ENCODE measurements at regions of chr11 and their contacts with region 1.

Region 1: DNA sequence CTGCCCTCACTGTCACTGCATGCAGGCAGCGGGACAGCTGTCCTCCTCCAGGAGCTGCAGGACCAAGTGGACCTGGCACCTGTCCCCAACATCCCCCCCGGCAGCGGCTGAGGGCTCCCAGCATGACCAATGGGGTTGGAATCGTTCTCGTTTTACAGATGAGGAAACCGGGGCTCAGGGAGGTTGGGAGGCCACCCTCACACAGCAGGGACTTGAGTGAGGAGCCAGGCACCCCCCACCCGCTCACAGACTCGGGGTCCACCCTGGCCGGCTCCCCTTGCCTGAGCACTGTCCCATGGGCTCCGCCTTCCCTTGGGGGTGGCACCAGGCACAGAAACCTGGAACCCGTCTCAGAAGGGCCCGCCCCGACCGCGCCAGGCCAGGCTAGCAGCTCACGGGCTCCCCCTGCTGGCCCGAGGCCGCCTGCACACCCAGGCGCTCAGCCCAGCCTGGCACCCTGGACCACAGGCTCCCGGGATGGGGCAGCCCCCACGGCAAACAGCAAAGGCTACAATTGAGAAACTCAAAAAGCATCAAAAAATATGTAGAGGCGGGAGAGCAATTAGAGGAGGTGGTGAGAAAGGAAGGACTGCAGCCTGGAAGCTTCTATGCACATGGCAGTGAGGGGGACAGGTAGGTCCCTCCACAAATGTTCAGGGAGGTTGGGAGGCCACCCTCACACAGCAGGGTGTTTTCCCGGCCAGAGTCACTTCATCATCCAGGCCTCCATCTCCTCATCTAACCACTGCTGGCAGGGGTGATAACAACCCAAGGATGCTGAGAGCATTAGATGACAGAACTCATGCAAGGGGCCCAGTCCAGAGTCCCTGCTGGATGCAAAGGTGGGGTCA is 12.8 kb downstream of the MACROD1 start:
- DNase-seq: peak; percentile 95
- H3K4me3 ChIP-seq: peak overlapping the region in 1 of 2 experiments; percentile 42; a peak in 1 of 4 replicates
- H3K27ac ChIP-seq: peak overlapping the region in 1 of 2 experiments; percentile 55; a peak in 1 of 4 replicates
- H3K4me1 ChIP-seq: peaks cover 0 to 55% of the 10 kb centered on the region in 2 experiments; a peak in 2 of 4 replicates
- H3K27me3 ChIP-seq: no peaks in the 10 kb centered on the region
- CTCF ChIP-seq: peak; percentile 99
- EP300 ChIP-seq: no peak
- RAD21 ChIP-seq: peak; percentile 84

Region 2: DNA sequence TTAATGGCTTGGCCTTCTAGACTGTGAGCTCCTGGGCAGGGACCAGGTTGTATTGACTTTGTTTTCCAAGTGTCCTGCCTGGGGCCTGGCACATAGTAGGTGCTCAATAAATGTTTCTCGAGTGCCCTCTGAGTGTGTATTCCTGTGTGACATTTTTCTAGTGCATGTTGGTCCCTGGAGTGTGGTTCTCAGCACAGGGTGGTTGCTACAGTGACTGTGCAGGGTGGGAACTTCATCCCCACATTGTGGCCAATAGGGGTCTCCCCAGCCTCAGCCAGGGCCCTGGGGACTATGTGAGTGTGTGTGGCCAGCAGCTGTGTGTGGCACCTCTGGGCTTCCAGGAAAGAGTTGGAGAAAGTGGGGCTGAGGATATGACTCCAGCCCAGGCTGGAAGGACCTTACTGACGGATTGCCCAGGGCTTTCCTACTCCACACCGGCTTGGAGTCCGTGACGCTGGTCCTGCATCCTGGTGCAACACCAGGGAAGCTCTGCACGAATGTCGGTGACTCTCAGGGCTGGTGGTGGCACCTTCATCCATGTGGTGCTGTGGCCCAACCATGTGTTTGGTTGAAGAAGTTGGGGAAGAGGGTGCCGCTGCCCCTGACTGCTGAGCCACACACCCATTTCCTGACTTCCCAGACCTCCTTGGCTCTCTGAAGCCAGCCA is 323.1 kb before region 1 on chr11:
- CTCF ChIA-PET with region 1: interaction called, 12 read pairs
- POLR2A ChIA-PET with region 1: no interaction called
- DNase-seq: peak; percentile 79
- H3K4me3 ChIP-seq: no peak overlapping the region
- H3K27ac ChIP-seq: no peak overlapping the region
- H3K4me1 ChIP-seq: no peaks in the 10 kb centered on the region; a peak in 1 of 4 replicates
- H3K27me3 ChIP-seq: no peaks in the 10 kb centered on the region
- CTCF ChIP-seq: peak; percentile 45
- EP300 ChIP-seq: no peak
- RAD21 ChIP-seq: peak; percentile 65

Region 3: DNA sequence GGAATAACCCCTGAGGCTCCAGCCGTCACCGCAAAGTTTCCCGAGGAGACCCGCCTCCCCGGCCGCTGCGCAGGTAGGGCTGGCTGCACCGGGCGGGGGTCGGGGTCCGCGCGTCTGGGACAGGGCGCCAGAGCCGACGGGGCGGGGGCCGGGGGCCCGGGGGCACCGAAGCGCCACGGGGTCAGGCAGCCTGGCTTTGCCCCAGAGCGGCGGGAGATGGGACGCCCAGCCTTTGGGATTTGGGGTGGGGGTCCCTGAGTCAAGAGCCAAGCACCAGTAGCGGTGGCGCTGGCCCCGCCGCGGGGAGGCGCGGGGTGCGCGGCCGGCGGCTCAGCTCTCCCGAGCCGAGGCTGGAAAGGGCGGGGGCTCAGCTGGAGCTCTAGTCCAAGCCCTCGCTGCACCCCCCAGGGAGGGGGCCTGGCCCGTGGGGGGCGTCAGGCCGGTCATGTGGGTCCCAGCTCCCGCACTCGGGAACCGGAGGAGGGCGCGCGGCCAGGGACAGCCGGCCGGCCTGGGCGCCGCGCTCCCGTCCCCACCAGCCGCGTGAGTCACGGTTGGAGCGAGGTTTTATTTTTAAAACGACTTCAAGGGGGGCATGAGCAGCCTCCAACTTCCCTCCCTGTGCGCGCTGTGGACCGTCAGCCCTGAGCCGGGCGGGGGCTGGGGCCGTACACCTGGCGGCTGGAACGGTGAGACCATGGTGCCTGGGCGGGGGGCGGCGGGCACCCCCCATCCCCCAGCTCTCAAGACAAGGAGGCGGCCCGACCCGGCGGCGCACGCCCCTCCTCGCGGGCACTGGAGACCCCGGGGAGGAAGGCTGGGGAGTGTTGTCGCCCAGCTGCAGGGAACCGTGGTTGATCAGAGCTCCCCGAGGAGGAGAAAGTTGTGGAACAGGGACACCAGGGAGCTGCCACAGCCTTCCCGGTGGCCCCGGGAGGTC is 116.7 kb before region 1 on chr11:
- CTCF ChIA-PET with region 1: interaction called, 207 read pairs
- POLR2A ChIA-PET with region 1: interaction called, 7 read pairs
- DNase-seq: peak; percentile 73
- H3K4me3 ChIP-seq: peak overlapping the region; percentile 58 to 62
- H3K27ac ChIP-seq: peak overlapping the region in 1 of 2 experiments; percentile 84; a peak in 2 of 4 replicates
- H3K4me1 ChIP-seq: peaks cover 3 to 59% of the 10 kb centered on the region in 2 experiments; a peak in 2 of 4 replicates
- H3K27me3 ChIP-seq: no peaks in the 10 kb centered on the region
- CTCF ChIP-seq: peak; percentile 29; the same call in 1 of the 2 replicates
- EP300 ChIP-seq: no peak
- RAD21 ChIP-seq: peak; percentile 9; the same call in 1 of the 2 replicates

Region 4: DNA sequence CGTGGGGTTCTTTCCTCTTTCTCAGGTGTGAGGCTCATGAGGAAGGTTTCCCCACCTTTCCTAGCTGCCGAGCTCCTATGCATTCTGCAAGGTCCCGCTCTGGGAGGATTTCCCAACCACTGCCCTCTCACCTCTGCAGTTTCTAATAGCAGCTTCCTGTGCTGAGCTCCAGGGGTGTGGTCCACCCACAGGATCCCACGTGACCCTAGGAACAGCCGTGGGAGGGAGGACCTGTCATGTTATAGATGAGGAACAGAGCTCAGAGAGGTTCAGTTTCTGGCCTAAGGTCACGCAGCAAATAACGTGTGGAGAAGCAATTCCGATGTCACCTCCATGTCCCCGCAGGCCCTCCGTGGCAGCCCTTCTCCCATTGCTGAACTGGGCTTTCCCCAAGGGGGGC is 78.8 kb before region 1 on chr11:
- CTCF ChIA-PET with region 1: interaction called, 14 read pairs
- POLR2A ChIA-PET with region 1: interaction called, 18 read pairs
- DNase-seq: no peak
- H3K4me3 ChIP-seq: no peak overlapping the region
- H3K27ac ChIP-seq: peak overlapping the region in 1 of 2 experiments; percentile 81; a peak in 1 of 4 replicates
- H3K4me1 ChIP-seq: peaks cover 11 to 90% of the 10 kb centered on the region in 2 experiments; a peak in 2 of 4 replicates
- H3K27me3 ChIP-seq: no peaks in the 10 kb centered on the region
- CTCF ChIP-seq: no peak
- EP300 ChIP-seq: no peak
- RAD21 ChIP-seq: no peak

Region 5: DNA sequence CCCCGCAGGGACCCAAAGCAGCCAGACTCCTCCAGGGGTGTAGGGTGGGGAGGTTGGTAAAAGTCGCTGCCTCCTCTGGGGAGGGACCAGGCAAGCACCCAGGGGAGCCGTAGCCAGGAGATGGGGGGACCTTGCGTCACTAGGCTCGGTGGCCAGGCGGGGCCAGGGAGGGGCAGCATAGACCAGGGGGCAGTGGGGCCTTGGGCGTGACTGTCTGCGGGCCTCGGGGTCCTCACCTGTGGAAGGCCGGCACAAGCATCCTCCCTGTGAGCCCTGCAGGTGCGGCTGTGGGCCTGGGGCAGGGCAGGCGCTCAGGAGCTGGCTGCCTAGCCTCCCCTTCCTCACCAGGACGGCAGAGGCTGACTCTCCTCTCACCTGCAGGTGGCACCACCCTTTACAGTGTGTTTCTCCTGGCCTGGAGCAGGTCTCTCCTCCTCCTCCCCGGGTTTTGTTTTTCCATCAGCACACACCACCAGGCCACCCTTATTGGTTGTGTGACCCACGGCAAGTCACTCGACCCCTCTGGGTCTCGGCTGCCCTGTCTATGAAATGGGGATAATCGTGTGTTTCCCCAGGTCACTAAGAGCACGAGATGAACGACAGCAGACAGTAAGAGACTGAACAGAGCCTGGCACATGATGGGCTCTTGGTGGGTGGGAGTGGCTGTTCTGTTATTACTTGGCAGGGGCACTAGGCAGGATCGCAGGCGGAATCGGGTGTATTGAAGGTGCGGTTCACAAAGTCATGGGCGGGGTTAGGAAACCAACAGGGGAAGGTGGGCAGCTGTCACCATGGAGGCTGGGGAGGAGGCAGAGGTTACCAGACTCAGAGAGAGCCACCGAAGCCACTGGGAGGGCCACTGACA is 64.7 kb before region 1 on chr11:
- CTCF ChIA-PET with region 1: interaction called, 28 read pairs
- POLR2A ChIA-PET with region 1: interaction called, 4 read pairs
- DNase-seq: no peak
- H3K4me3 ChIP-seq: no peak overlapping the region
- H3K27ac ChIP-seq: peak overlapping the region in 1 of 2 experiments; percentile 99; a peak in 2 of 4 replicates
- H3K4me1 ChIP-seq: peaks cover 0 to 95% of the 10 kb centered on the region in 2 experiments; a peak in 2 of 4 replicates
- H3K27me3 ChIP-seq: no peaks in the 10 kb centered on the region
- CTCF ChIP-seq: peak; percentile 26; the same call in 1 of the 2 replicates
- EP300 ChIP-seq: no peak
- RAD21 ChIP-seq: peak; percentile 33

Region 6: DNA sequence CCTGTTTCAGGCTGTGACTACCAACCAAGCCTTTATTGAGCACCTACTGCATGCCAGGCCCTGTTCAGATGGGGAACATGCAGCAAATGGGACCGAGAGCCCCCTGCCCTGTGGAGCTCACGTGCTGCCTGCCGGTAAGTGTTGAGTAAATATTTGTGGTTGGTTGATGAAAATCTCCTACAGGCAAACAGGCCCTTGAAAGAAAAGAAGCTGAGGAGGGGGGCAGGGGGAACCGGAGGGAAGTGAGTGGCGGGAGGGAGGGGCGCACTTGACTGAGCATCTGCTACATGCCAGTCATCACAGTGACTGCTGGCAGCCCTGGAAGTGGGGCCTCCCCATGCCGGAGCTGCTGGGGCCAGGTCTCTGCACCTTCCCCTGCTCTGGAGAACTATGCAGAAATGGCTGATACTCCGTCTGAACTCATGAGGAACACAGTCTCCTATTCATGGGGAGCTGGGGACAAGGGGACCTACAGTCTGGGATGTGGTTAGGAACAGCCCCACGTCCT is 21.3 kb before region 1 on chr11:
- CTCF ChIA-PET with region 1: interaction called, 25 read pairs
- POLR2A ChIA-PET with region 1: interaction called, 9 read pairs
- DNase-seq: no peak
- H3K4me3 ChIP-seq: no peak overlapping the region
- H3K27ac ChIP-seq: peak overlapping the region in 1 of 2 experiments; percentile 94; a peak in 2 of 4 replicates
- H3K4me1 ChIP-seq: peaks cover 0 to 56% of the 10 kb centered on the region in 2 experiments; a peak in 2 of 4 replicates
- H3K27me3 ChIP-seq: no peaks in the 10 kb centered on the region
- CTCF ChIP-seq: no peak
- EP300 ChIP-seq: no peak
- RAD21 ChIP-seq: no peak

Region 7: GRCh38 chr11:64165849-64166635 is 13.0 kb after region 1 on chr11 and contains the start of gene MACROD1:
- CTCF ChIA-PET with region 1: interaction called, 61 read pairs
- POLR2A ChIA-PET with region 1: no interaction called
- DNase-seq: peak; percentile 96
- H3K4me3 ChIP-seq: peak within 1 kb of the TSS; percentile 66 to 81
- H3K27ac ChIP-seq: peak within 1 kb of the TSS; percentile 17 to 77; a peak in 3 of 4 replicates
- H3K4me1 ChIP-seq: peaks cover 8 to 15% of the 10 kb centered on the region in 2 experiments; a peak in 3 of 4 replicates
- H3K27me3 ChIP-seq: no peaks in the 10 kb centered on the region
- CTCF ChIP-seq: no peak
- EP300 ChIP-seq: no peak
- RAD21 ChIP-seq: no peak
- polyA plus RNA-seq, gene MACROD1: 48.3 and 49.1 TPM in 2 replicates